ENCODE measurements at regions of chr16 and their contacts with region 1.

Region 1: GRCh38 chr16:68512183-68512582 is 26.9 kb upstream of the ZFP90 start:
- DNase-seq: no peak
- ATAC-seq: no peak
- H3K4me3 ChIP-seq: no peak overlapping the region
- H3K4me3 Mint-ChIP-seq: no peak overlapping the region
- H3K27ac ChIP-seq: no peak overlapping the region
- H3K27ac Mint-ChIP-seq: no peak overlapping the region
- H3K4me1 ChIP-seq: peaks cover 0 to 9% of the 10 kb centered on the region in 2 experiments
- H3K4me1 Mint-ChIP-seq: no peaks in the 10 kb centered on the region
- H3K27me3 ChIP-seq: peaks cover 0 to 12% of the 10 kb centered on the region in 2 experiments
- H3K27me3 Mint-ChIP-seq: peaks cover 0 to 2% of the 10 kb centered on the region in 2 donors

Region 2: GRCh38 chr16:68367030-68367429 is 145.2 kb before region 1 on chr16:
- CTCF ChIA-PET with region 1: interaction called, 3 to 12 read pairs
- POLR2A ChIA-PET with region 1: no interaction called
- DNase-seq: peak in 21 of 35 experiments; percentile 17 to 68 (median 35)
- ATAC-seq: peak in 1 of 4 experiments; percentile 33
- H3K4me3 ChIP-seq: no peak overlapping the region
- H3K4me3 Mint-ChIP-seq: peak overlapping the region in 1 of 3 donors; percentile 75
- H3K27ac ChIP-seq: no peak overlapping the region
- H3K27ac Mint-ChIP-seq: no peak overlapping the region
- H3K4me1 ChIP-seq: peaks cover 15 to 56% of the 10 kb centered on the region in 2 experiments
- H3K4me1 Mint-ChIP-seq: peaks cover 47 to 63% (median 47%) of the 10 kb centered on the region in 3 donors
- H3K27me3 ChIP-seq: peaks cover 0 to 45% of the 10 kb centered on the region in 2 experiments
- H3K27me3 Mint-ChIP-seq: peaks cover 2 to 4% of the 10 kb centered on the region in 2 donors

Region 3: GRCh38 chr16:68499006-68499405 is 13.2 kb before region 1 on chr16:
- CTCF ChIA-PET with region 1: no interaction called
- POLR2A ChIA-PET with region 1: no interaction called
- DNase-seq: no peak
- ATAC-seq: no peak
- H3K4me3 ChIP-seq: no peak overlapping the region
- H3K4me3 Mint-ChIP-seq: no peak overlapping the region
- H3K27ac ChIP-seq: no peak overlapping the region
- H3K27ac Mint-ChIP-seq: no peak overlapping the region
- H3K4me1 ChIP-seq: no peaks in the 10 kb centered on the region
- H3K4me1 Mint-ChIP-seq: peaks cover 0 to 7% (median 2%) of the 10 kb centered on the region in 3 donors
- H3K27me3 ChIP-seq: peaks cover 0 to 6% of the 10 kb centered on the region in 2 experiments
- H3K27me3 Mint-ChIP-seq: peaks cover 0 to 2% of the 10 kb centered on the region in 2 donors